ENCODE measurements at regions of chr10 and their contacts with region 1.

Region 1: DNA sequence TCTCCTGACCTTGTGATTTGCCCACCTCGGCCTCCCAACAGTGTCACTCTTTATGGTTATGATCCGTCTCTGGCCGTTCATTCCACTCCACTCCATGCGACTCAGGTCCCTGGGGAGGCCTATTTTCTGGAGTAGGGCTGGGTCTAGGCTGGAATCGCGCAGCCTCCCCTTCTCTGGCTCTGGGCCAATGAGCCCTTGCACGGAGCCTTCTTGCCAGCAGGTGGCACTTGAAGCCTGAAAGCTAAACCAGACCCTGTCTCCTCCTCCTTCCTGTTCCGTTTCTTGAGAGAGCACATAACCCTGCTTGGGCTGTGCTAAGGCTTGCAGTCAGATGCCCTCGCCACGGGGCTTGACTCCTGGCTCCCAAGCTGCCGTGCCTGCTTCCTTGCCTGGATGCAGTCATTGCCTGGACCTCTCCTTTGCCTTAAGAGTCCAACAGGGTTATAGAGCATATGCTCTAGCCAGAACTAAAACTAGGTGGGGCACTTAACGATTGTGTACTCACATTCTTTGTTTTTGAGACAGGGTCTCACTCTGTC is 9.6 kb upstream of the DNAJB12 start:
- DNase-seq: peak; percentile 94
- H3K4me3 Mint-ChIP-seq: no peak overlapping the region
- H3K27ac Mint-ChIP-seq: peak overlapping the region; percentile 74
- H3K4me1 Mint-ChIP-seq: peaks cover 10% of the 10 kb centered on the region
- H3K27me3 Mint-ChIP-seq: no peaks in the 10 kb centered on the region

Region 2: GRCh38 chr10:71999360-72000072 is 364.8 kb before region 1 on chr10:
- CTCF ChIA-PET with region 1: no interaction called
- intact Hi-C with region 1: no loop called
- DNase-seq: no peak
- H3K4me3 Mint-ChIP-seq: no peak overlapping the region
- H3K27ac Mint-ChIP-seq: no peak overlapping the region
- H3K4me1 Mint-ChIP-seq: no peaks in the 10 kb centered on the region
- H3K27me3 Mint-ChIP-seq: no peaks in the 10 kb centered on the region

Region 3: DNA sequence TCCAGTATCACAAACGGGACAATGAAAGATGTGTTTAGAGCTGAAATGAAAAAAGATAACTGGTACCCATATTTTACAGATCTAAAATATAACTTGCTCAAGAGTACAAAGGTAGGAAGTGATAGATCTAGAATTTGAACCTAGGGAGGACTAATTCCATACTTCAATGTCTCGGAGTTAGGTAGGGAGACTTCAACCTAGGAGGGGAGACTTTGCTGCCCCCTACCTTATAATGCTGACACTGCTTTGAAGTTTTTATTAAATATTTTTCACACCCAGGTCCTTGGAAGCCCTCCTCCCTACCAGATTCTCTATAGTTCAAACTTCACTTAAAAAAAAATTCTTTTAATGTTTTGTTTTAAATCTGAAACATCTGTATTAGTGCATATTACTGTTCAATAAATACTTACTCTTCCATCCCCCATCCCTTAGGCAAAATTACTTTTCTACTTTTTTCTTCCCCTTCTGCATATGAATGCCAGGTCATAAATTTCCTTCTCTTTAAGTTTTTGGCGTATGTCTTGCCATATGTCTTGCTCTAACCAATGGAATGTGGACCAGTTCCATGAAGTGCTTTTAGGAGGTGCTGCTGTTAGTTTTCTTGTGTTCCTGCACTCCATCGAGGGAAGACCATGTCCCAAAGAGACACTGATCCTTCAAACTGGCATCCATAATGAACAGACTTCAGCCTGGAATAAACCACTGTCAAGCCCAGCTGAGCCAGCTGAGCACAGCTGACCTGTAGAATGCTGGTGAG is 203.8 kb after region 1 on chr10:
- CTCF ChIA-PET with region 1: interaction called, 6 read pairs
- intact Hi-C with region 1: loop called (anchors 1 kb)
- DNase-seq: no peak
- H3K4me3 Mint-ChIP-seq: no peak overlapping the region
- H3K27ac Mint-ChIP-seq: no peak overlapping the region
- H3K4me1 Mint-ChIP-seq: peaks cover 21% of the 10 kb centered on the region
- H3K27me3 Mint-ChIP-seq: no peaks in the 10 kb centered on the region

Region 4: GRCh38 chr10:72834183-72834825 is 470.0 kb after region 1 on chr10:
- CTCF ChIA-PET with region 1: interaction called, 45 read pairs
- intact Hi-C with region 1: loop called (anchors 1 kb)
- DNase-seq: peak; percentile 61
- H3K4me3 Mint-ChIP-seq: no peak overlapping the region
- H3K27ac Mint-ChIP-seq: no peak overlapping the region
- H3K4me1 Mint-ChIP-seq: no peaks in the 10 kb centered on the region
- H3K27me3 Mint-ChIP-seq: no peaks in the 10 kb centered on the region

Region 5: GRCh38 chr10:73060738-73061635 is 696.7 kb after region 1 on chr10:
- CTCF ChIA-PET with region 1: no interaction called
- intact Hi-C with region 1: loop called (anchors 1 kb)
- DNase-seq: no peak
- H3K4me3 Mint-ChIP-seq: no peak overlapping the region
- H3K27ac Mint-ChIP-seq: peak overlapping the region; percentile 58
- H3K4me1 Mint-ChIP-seq: peaks cover 10% of the 10 kb centered on the region
- H3K27me3 Mint-ChIP-seq: no peaks in the 10 kb centered on the region

Region 6: DNA sequence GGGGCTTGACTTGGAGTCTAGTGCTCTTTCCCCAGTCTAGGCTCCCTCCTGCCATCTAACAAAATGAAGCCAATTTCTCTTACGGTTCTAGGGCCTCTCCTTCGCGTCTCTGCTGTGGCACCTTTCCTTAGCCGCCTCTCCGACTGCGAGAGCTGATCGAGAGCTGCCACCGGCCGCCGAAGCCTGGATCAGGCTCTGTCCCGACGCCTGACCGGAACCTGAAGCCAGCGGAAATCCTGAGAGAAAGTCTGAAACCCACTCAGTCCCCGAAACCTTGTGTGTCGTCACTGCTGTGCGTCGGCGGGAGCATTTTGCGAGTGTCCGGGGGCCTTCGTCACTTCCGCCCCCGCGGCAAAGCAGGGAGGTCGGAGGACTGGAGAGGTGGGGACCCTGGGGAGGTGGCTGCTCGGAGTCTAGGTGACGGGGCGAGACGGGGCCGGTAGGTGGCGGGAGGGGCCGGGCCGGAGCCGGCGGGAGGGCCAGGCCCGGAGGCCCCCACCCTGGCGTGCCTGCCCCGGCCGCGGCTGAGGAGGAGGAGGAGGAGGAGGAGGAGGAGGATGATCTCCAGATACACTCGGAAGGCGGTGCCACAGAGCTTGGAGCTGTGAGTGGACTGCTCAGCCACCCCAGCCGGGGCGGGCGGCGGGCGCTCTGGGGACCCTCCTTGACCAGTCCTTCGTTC is 803.6 kb after region 1 on chr10 and contains the starts of genes ECD and FAM149B1:
- CTCF ChIA-PET with region 1: interaction called, 10 read pairs
- intact Hi-C with region 1: loop called (anchors 5 kb)
- DNase-seq: peak; percentile 96
- H3K4me3 Mint-ChIP-seq: peak within 1 kb of the TSS; percentile 100
- H3K27ac Mint-ChIP-seq: peak within 1 kb of the TSS; percentile 100
- H3K4me1 Mint-ChIP-seq: peaks cover 37% of the 10 kb centered on the region
- H3K27me3 Mint-ChIP-seq: no peaks in the 10 kb centered on the region
- total RNA-seq, gene ECD: 26.5 to 28.1 TPM
- total RNA-seq, gene FAM149B1: 13.3 to 13.7 TPM

Measured in activated naive CD4-positive, alpha-beta T cell treated with anti-CD3 and anti-CD28 coated beads for 36 hours (primary cell).